WTC11 (cell line): ENCODE measurements at regions of chr6 and their contacts with region 1.

Region 1: DNA sequence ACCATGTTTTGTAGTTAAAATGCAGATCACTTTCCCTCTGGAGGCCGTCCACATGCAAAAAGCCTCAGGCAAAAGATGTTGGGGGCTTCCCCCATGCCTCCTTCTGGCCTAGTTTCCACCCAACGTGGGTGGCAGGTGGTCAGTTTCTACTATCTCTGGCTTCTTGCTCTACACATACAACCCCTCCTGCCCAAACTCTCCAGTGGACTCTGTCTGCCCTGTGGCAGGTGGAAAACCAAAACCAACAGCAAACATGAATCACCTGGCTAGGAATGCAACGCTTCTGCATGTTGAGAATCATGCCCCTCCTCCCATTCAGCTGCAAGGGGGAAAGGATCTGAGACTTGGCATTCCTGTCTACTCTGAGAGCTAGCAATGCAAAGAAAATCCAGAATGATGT is 94.8 kb downstream of the MBOAT1 start:
- DNase-seq: peak; percentile 16
- ATAC-seq: peak; percentile 78
- H3K4me3 Mint-ChIP-seq: no peak overlapping the region
- H3K27ac Mint-ChIP-seq: peak overlapping the region; percentile 8; the same call in 1 of the 2 replicates
- H3K4me1 Mint-ChIP-seq: peaks cover 18% of the 10 kb centered on the region
- H3K27me3 Mint-ChIP-seq: no peaks in the 10 kb centered on the region
- CTCF ChIP-seq: no peak

Region 2: GRCh38 chr6:20092071-20092566 is 25.4 kb before region 1 on chr6:
- CTCF ChIA-PET with region 1: interaction called, 11 read pairs
- POLR2A ChIA-PET with region 1: no interaction called
- DNase-seq: no peak
- ATAC-seq: peak; percentile 66
- H3K4me3 Mint-ChIP-seq: no peak overlapping the region
- H3K27ac Mint-ChIP-seq: peak overlapping the region; percentile 93
- H3K4me1 Mint-ChIP-seq: peaks cover 18% of the 10 kb centered on the region
- H3K27me3 Mint-ChIP-seq: no peaks in the 10 kb centered on the region
- CTCF ChIP-seq: peak; percentile 60; the same call in 1 of the 2 replicates

Region 3: GRCh38 chr6:20286968-20287565 is 169.6 kb after region 1 on chr6:
- CTCF ChIA-PET with region 1: no interaction called
- POLR2A ChIA-PET with region 1: no interaction called
- DNase-seq: no peak
- ATAC-seq: no peak
- H3K4me3 Mint-ChIP-seq: no peak overlapping the region
- H3K27ac Mint-ChIP-seq: no peak overlapping the region
- H3K4me1 Mint-ChIP-seq: no peaks in the 10 kb centered on the region; the same call in 1 of the 2 replicates
- H3K27me3 Mint-ChIP-seq: no peaks in the 10 kb centered on the region; the same call in 1 of the 2 replicates
- CTCF ChIP-seq: no peak